MCF 10A (cell line): ENCODE measurements at regions of chr1 and their contacts with region 1.

Region 1: GRCh38 chr1:207321079-207321789 is at the start of gene CD55:
- DNase-seq: peak; percentile 100
- H3K4me3 Mint-ChIP-seq: peak within 1 kb of the TSS; percentile 71
- H3K27ac Mint-ChIP-seq: peak within 1 kb of the TSS; percentile 93
- H3K4me1 Mint-ChIP-seq: peaks cover 41% of the 10 kb centered on the region
- H3K27me3 Mint-ChIP-seq: no peaks in the 10 kb centered on the region
- CTCF ChIP-seq: peak; percentile 22
- total RNA-seq, gene CD55: 159 and 213 TPM in 2 replicates

Region 2: DNA sequence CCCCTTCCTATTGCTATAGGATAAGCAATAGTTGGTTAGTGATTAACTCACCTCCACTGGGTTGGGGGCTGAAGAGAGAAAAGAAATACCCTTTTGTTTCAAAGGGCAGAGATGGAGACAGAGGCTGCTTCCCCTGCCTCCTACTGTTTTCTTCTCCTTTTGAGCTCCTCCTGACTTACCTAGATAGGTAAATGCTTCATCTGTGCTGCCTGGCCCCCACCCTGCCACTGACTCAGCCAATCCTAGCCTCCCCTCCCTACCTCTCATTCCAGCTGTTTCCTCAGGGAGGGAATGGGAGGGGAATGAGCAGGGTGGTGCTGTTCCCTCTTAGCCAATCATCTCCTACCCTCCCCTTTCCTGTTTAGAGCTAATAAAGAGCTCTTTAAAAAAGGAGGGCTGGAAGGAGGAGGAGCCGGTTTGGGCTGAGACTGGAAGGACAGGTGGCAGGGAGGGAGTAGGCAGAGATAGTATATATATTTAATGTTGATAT is 288.7 kb before region 1 on chr1 and contains the start of gene C1orf116:
- CTCF ChIA-PET with region 1: interaction called, 9 read pairs
- POLR2A ChIA-PET with region 1: interaction called, 70 read pairs
- intact Hi-C with region 1: loop called (anchors 5 kb)
- DNase-seq: peak; percentile 98
- H3K4me3 Mint-ChIP-seq: peak within 1 kb of the TSS; percentile 75
- H3K27ac Mint-ChIP-seq: peak within 1 kb of the TSS; percentile 86
- H3K4me1 Mint-ChIP-seq: peaks cover 79% of the 10 kb centered on the region
- H3K27me3 Mint-ChIP-seq: no peaks in the 10 kb centered on the region
- CTCF ChIP-seq: no peak
- total RNA-seq, gene C1orf116: 35.4 and 35.5 TPM in 2 replicates

Region 3: DNA sequence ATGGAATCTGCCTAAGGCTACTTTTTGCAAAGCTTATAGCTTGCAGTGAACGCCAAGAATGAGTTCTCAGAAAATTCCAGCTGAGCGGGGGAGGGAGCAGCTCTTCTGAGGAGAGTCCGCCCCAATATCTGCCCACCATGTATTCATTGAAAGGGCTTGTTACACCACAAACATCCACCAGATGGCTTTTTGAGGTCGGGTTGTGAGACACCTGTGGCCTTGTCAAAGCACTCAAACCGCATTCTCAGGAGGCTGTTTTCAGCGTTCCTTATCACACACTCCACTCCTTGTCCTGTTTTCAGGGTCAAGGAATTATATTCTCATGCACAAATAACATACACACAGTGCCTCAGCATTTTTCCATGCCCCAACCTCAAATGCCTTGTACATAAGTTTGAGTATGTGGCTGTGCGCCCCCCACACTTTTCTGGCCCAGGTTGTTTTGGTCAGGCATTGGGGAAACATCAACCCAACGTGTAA is 236.5 kb before region 1 on chr1:
- CTCF ChIA-PET with region 1: interaction called, 4 read pairs
- POLR2A ChIA-PET with region 1: interaction called, 22 read pairs
- intact Hi-C with region 1: loop called (anchors 2 kb)
- DNase-seq: peak; percentile 90
- H3K4me3 Mint-ChIP-seq: no peak overlapping the region
- H3K27ac Mint-ChIP-seq: no peak overlapping the region
- H3K4me1 Mint-ChIP-seq: peaks cover 6% of the 10 kb centered on the region
- H3K27me3 Mint-ChIP-seq: peaks cover 21% of the 10 kb centered on the region
- CTCF ChIP-seq: peak; percentile 92

Region 4: DNA sequence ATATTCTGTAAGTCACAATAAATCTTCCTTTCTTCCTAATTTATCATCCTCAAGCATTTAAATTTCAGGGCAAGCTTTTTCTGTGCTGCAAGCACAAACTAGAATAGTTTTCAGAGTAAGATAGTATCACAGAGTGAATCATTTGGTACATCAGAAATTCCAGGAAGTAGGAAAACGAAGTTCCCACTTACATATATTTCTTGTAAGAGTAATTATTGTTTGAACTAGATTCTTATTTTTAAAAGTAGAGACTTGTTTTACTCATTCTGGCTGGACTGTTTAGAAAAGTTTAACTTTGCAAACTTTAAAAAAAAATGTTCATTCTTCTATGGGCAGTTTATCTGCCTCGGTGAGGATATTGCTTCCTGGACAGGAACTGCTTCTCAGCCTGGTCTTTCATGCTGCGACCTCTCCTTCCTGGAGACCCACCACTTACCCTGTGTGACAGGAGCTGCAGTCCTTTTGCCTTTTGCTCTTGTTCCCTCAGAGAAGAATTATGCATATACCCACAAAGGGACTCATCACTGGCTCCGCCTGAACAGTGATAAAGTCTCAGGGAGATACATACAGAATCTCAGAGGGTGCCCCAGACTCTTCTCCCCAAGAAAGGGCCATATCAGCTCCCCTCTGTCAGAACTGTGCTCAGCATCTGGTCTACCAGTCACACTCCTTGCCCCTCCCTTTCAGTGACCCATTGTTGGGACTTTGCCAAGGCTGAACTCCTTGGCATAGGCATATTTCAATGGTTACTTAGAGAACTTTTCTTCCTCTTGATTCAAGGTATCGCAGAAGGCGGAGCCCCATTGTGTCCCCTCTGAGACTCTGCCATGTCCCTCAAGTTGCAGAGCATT is 102.5 kb before region 1 on chr1:
- CTCF ChIA-PET with region 1: no interaction called
- POLR2A ChIA-PET with region 1: interaction called, 72 read pairs
- intact Hi-C with region 1: no loop called
- DNase-seq: peak; percentile 84
- H3K4me3 Mint-ChIP-seq: no peak overlapping the region
- H3K27ac Mint-ChIP-seq: peak overlapping the region; percentile 6
- H3K4me1 Mint-ChIP-seq: peaks cover 33% of the 10 kb centered on the region
- H3K27me3 Mint-ChIP-seq: no peaks in the 10 kb centered on the region
- CTCF ChIP-seq: no peak

Region 5: DNA sequence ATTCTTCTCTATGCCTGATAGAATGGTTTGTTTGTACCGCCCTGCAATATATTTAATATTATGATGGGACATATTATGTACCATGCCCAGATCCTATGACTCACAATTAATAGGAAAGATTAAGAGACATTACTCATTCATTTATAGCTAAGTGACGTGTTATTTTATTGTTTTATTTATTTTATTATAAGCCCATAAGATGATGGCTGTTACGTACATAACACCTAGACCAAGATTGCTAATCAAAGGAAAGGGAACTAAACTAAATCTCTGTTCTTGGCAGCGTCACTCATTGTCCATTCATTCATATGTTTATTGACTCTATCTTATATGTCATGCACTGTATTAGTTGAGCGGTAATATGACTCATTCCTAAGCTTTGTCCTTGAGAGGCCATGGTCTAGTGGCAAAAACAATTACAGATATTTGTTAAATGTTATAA is 16.5 kb before region 1 on chr1:
- CTCF ChIA-PET with region 1: interaction called, 13 read pairs
- POLR2A ChIA-PET with region 1: interaction called, 155 read pairs
- intact Hi-C with region 1: no loop called
- DNase-seq: peak; percentile 80
- H3K4me3 Mint-ChIP-seq: no peak overlapping the region
- H3K27ac Mint-ChIP-seq: no peak overlapping the region
- H3K4me1 Mint-ChIP-seq: peaks cover 29% of the 10 kb centered on the region
- H3K27me3 Mint-ChIP-seq: no peaks in the 10 kb centered on the region
- CTCF ChIP-seq: no peak

Region 6: DNA sequence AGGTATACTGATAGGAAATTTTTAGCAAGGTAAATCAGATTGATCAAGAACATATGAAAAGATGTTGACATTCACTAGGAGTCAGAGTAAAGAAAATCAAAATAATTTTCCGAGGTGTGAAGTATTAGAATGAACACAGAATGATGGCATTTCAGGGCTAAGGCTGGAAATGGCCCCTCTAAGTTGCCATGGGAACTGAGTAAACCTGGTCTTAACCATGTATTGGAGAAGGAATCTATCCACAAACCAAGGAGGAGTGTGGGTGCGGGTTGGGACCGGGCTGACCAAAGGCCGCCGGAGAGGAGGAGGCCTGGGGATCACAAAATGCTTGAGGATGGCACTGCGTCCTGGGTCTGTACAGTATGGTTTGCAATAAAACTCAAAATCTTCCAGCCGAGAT is 53.7 kb after region 1 on chr1:
- CTCF ChIA-PET with region 1: interaction called, 3 read pairs
- POLR2A ChIA-PET with region 1: interaction called, 10 read pairs
- intact Hi-C with region 1: no loop called
- DNase-seq: no peak
- H3K4me3 Mint-ChIP-seq: no peak overlapping the region
- H3K27ac Mint-ChIP-seq: no peak overlapping the region
- H3K4me1 Mint-ChIP-seq: no peaks in the 10 kb centered on the region
- H3K27me3 Mint-ChIP-seq: no peaks in the 10 kb centered on the region
- CTCF ChIP-seq: no peak

Region 7: GRCh38 chr1:207470927-207471326 is 149.7 kb after region 1 on chr1:
- CTCF ChIA-PET with region 1: no interaction called
- POLR2A ChIA-PET with region 1: no interaction called
- intact Hi-C with region 1: no loop called
- DNase-seq: no peak
- H3K4me3 Mint-ChIP-seq: no peak overlapping the region
- H3K27ac Mint-ChIP-seq: no peak overlapping the region
- H3K4me1 Mint-ChIP-seq: no peaks in the 10 kb centered on the region
- H3K27me3 Mint-ChIP-seq: peaks cover 92% of the 10 kb centered on the region
- CTCF ChIP-seq: no peak